AG04449 (cell line): ENCODE measurements at regions of chr2 and their contacts with region 1.

Region 1: DNA sequence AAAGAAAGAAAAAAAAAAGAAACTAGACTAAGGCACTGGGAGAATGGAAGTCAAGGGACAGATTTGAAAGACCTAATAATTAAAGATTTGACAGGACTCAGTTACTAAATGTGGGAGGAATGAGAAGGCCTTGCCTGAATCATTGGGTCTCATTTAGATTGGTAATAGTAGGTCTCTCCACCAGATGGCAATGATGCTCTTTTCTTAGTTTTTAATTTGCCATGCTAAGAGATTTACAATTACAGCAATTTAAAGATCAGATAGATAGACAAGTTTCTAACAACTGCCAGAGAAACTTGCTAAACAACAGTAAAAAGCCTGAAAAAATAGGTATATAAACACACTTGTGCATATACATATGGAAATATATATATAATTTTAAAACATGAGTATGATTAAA is 153.0 kb downstream of the TMEM247 start:
- DNase-seq: no peak
- H3K4me3 ChIP-seq: no peak overlapping the region
- CTCF ChIP-seq: peak; percentile 43

Region 2: DNA sequence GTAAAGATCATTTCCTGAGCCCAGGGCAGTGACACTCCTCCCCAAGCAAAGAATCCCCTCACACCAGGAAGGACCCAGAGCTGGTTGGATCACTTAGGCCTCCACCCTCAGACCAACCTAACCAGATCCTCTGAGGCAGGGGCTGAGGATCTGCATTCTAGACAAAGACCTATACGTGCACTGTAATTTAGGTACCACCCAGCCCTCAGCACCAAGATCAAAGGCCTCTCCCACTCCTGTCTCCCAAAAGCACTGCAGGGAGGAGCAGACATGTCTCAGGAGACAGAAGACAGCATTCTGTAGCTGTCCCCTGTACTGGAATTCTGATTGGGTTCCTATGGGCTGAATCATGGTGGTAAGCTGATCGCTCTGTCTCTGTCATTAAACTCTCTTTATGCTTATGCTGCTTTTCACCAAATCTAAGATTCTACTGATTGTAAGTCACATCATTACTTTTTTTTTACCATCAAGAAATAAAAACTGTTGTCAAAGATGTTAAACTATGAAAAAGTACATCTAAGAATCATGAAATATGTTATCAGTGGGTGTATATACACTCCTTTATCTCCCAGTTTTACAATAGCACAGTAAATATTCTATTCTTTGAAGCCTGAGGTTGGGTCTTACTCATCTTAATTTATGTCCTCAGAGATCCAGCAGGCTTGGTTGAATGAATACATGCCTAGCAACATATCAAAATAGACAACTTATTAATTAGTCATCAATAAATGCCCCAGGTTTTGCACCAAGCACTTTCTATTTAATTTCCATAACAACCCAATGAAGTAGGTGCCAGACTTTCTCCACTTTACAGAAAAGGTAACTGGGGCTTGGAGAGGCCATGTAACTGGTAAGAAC is 254.9 kb after region 1 on chr2:
- CTCF ChIA-PET with region 1: interaction called, 54 read pairs
- POLR2A ChIA-PET with region 1: no interaction called
- DNase-seq: no peak
- H3K4me3 ChIP-seq: no peak overlapping the region
- CTCF ChIP-seq: no peak